Aorta (tissue), 5 donors: ENCODE measurements at regions of chr13 and their contacts with region 1.

Region 1: DNA sequence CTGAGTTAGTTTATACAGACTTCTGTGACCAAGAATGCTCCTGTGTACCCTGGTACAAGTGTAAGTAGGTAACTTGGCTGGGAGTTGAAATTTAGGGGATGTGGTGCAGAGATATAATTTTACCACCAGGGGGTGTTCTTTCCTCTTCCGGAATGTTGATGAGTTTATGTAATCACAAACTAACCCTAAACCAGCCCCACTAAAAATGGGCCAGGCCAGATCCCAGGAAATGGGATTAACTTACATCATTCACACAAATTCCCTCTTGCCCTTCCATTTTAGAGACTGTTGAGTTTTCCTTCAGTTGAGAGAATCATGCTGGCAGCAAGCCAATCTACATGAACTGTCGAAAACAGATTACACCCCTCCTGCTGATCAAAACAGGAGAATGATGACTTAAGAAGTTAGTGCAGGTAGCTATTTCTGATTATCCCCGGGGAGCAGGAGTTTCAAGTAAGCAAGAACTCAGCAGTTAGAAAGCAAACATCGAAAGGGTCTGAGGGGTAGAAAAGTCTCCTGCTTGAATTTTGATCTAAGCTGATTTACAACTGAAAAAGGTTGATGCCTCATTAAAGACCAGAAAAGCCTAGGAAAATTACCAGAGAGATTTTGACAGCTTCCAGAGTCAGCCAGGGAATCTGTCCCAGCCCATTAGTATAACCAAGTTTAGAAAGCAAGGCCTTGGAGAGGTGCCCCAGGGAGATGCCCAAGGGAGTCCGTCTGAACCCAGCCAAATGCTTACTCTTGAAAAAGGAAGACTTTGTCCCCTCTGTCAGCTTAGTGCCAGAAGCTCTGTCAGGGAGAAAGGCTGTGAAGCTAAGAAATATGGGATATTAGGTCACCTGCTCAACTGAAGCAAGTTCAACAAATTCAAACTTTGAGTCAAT is 32.3 kb upstream of the MED4 start:
- DNase-seq: peak; percentile 74 to 81
- ATAC-seq: peak; percentile 91
- H3K4me3 ChIP-seq: no peak overlapping the region
- H3K27ac ChIP-seq: peak overlapping the region; percentile 90 to 97
- H3K4me1 ChIP-seq: peaks cover 3 to 5% of the 10 kb centered on the region in 2 donors
- H3K27me3 ChIP-seq: no peaks in the 10 kb centered on the region

Region 2: DNA sequence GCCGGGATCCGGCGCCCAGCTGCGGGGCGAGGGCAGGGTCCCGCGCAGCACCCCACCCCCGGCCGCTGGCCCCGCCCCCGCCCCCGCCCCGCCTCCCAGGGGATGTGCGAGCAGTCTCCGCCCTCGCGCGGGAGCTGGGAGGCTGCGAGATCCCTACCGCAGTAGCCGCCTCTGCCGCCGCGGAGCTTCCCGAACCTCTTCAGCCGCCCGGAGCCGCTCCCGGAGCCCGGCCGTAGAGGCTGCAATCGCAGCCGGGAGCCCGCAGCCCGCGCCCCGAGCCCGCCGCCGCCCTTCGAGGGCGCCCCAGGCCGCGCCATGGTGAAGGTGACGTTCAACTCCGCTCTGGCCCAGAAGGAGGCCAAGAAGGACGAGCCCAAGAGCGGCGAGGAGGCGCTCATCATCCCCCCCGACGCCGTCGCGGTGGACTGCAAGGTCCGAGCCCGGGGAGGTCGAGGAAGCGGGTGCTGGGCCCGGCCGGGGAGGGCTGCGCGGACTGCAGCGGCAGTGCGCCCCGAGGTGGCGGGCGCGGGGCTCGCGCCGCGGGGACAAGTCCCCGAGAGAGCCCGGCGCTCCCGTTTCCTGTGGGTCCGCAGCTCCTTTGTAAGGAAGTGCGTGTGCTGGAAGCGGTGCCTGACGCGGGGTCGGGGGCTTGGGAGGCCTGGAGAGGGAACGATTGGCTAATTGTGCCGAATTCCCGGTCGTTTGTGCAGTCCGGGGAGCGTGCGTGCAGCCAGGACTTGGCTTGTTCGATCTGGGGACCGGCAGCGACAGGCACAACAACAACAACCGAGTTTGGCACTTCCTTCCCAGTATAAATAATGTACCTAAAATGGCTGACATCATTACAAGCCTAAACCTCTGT is 106.1 kb after region 1 on chr13 and contains the start of gene ITM2B:
- intact Hi-C with region 1: loop called in 1 of 2 experiments (anchors 2 kb)
- DNase-seq: peak; percentile 88 to 92
- ATAC-seq: peak; percentile 92
- H3K4me3 ChIP-seq: peak within 1 kb of the TSS; percentile 65 to 89
- H3K27ac ChIP-seq: peak within 1 kb of the TSS; percentile 90 to 98
- H3K4me1 ChIP-seq: peaks cover 0 to 12% of the 10 kb centered on the region in 2 donors
- H3K27me3 ChIP-seq: no peaks in the 10 kb centered on the region
- total RNA-seq, gene ITM2B: 549 to 771 TPM

Region 3: GRCh38 chr13:48400850-48401291 is 273.7 kb after region 1 on chr13:
- intact Hi-C with region 1: loop called in 1 of 2 experiments (anchors 5 kb)
- DNase-seq: no peak
- ATAC-seq: peak; percentile 83
- H3K4me3 ChIP-seq: no peak overlapping the region
- H3K27ac ChIP-seq: peak overlapping the region in 1 of 2 donors; percentile 18
- H3K4me1 ChIP-seq: peaks cover 2 to 3% of the 10 kb centered on the region in 2 donors
- H3K27me3 ChIP-seq: no peaks in the 10 kb centered on the region